ENCODE measurements at regions of chr3 and their contacts with region 1.

Region 1: DNA sequence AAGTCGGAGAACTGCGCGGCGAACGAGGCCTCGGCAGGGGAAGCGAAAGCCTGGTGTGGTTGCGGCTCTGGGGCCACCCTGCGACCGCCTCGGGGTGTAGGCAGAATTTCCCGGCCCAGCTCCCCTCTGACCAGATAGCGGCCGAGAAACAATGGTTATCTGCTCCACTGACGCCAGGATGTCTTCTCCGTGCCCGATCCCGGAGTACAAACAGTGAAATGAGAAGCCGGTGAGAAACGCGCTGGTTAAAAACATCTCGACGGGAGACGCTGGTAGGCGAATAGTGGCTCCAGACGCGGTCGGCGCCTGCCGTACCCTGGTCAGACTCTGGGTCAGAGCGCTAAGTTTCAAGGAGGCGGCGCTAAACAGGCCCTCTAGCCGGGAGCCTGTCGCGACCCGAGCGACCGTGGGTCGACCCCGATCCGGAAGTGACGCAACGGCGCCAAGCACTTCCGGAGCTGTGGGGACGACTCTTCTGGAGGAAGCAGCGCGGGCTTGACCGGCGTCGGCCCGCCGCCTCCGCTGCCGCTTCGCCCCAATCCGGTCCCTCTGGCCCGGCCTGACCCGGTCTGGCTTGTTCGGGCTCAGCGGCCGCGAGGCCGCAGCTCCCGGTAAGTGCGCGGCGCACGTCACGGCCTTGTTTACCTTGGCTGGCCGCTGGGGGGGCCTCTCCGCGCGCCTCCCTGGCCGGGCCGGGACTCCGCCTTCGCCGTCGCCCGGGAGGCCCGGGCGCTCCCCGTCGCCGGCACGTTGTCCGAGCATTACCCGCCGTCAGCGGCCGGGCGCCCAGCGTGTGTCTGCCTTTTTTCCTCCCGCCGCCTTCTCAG is at the start of gene ARIH2:
- DNase-seq: peak; percentile 94
- ATAC-seq: peak; percentile 75
- H3K4me3 Mint-ChIP-seq: peak within 1 kb of the TSS; percentile 90
- H3K27ac Mint-ChIP-seq: peak within 1 kb of the TSS; percentile 100
- H3K4me1 Mint-ChIP-seq: peaks cover 30% of the 10 kb centered on the region
- H3K27me3 Mint-ChIP-seq: no peaks in the 10 kb centered on the region
- total RNA-seq, gene ARIH2: 105 to 112 TPM

Region 2: DNA sequence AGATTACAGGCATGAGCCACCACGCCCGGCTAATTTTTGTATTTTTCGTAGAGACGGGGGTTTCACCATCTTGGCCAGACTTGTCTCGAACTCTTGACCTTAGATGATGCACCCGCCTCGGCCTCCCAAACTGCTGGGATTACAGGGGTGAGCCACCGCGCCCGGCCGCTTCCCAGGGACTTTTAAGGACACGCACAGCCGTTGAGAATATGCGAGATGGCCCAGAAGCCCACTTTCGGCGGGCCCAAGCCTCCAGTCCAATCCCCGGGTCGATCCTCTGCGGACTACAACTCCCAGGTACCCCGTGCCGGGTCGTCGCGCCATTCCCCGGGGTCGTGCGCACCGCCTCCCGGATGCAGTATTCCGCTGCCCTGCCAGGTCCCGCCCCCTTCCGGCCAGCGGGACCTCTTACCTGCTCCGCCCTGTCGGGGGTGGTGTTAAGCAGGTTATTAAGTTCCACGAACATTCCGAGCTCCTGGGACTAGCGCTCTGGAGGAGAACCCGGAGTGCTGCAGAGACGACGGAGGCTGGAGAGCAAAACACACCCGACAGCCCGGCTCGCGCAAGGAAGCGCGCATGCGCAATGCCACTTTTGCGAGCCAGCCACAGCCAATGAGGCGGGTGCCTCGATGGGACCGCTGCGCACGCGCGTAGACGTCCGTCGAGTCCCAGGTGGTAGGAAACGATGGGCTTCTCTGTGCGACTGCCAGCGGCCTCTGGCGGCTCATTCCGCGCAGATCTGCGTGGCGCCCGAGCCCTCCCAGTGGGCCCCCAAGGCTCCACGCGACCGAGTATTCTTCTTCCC is 1405.3 kb before region 1 on chr3 and contains the start of gene ELP6:
- CTCF ChIA-PET with region 1: no interaction called
- POLR2A ChIA-PET with region 1: no interaction called
- intact Hi-C with region 1: loop called in 1 of 2 experiments (anchors 5 kb)
- DNase-seq: peak; percentile 99
- ATAC-seq: peak; percentile 97
- H3K4me3 Mint-ChIP-seq: peak within 1 kb of the TSS; percentile 91
- H3K27ac Mint-ChIP-seq: peak within 1 kb of the TSS; percentile 96
- H3K4me1 Mint-ChIP-seq: peaks cover 20% of the 10 kb centered on the region
- H3K27me3 Mint-ChIP-seq: no peaks in the 10 kb centered on the region
- total RNA-seq, gene ELP6: 27.8 to 40.3 TPM

Region 3: GRCh38 chr3:48492543-48493501 is 425.8 kb before region 1 on chr3:
- CTCF ChIA-PET with region 1: no interaction called
- POLR2A ChIA-PET with region 1: no interaction called
- intact Hi-C with region 1: no loop called
- DNase-seq: no peak
- ATAC-seq: no peak
- H3K4me3 Mint-ChIP-seq: no peak overlapping the region
- H3K27ac Mint-ChIP-seq: no peak overlapping the region
- H3K4me1 Mint-ChIP-seq: no peaks in the 10 kb centered on the region
- H3K27me3 Mint-ChIP-seq: no peaks in the 10 kb centered on the region

Region 4: GRCh38 chr3:48609088-48610005 is 309.3 kb before region 1 on chr3 and contains the start of gene UQCRC1:
- CTCF ChIA-PET with region 1: no interaction called
- POLR2A ChIA-PET with region 1: no interaction called
- intact Hi-C with region 1: loop called in 1 of 2 experiments (anchors 5 kb)
- DNase-seq: peak; percentile 96
- ATAC-seq: peak; percentile 96
- H3K4me3 Mint-ChIP-seq: peak within 1 kb of the TSS; percentile 97
- H3K27ac Mint-ChIP-seq: peak within 1 kb of the TSS; percentile 95
- H3K4me1 Mint-ChIP-seq: peaks cover 27% of the 10 kb centered on the region
- H3K27me3 Mint-ChIP-seq: no peaks in the 10 kb centered on the region
- total RNA-seq, gene UQCRC1: 205 to 231 TPM

Region 5: GRCh38 chr3:48847504-48848423 is 70.8 kb before region 1 on chr3 and contains the start of gene PRKAR2A:
- CTCF ChIA-PET with region 1: interaction called, 3 read pairs
- POLR2A ChIA-PET with region 1: interaction called, 11 read pairs
- intact Hi-C with region 1: loop called (anchors 1 to 5 kb)
- DNase-seq: peak; percentile 89
- ATAC-seq: peak; percentile 89
- H3K4me3 Mint-ChIP-seq: peak within 1 kb of the TSS; percentile 82
- H3K27ac Mint-ChIP-seq: peak within 1 kb of the TSS; percentile 87
- H3K4me1 Mint-ChIP-seq: peaks cover 26% of the 10 kb centered on the region
- H3K27me3 Mint-ChIP-seq: no peaks in the 10 kb centered on the region
- total RNA-seq, gene PRKAR2A: 28.7 to 35.2 TPM

Region 6: DNA sequence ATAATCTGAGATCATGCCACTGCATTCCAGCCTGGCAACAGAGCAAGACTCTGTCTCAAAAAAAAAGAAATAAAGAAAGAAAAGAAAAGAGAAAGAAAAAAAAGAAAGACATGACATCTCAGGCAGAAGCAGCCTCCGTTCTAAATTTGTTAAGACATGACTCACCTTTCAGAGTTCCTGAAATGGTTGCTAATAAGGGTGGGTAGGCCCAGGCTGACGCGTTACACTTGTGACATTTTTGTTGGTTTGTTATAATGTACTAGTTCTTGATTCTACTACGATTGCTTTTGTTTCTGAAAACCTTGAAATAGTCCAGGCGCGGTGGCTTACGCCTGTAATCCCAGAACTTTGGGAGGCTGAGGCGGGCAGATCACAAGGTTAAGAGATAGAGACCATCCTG is 40.9 kb before region 1 on chr3:
- CTCF ChIA-PET with region 1: no interaction called
- POLR2A ChIA-PET with region 1: no interaction called
- intact Hi-C with region 1: no loop called
- DNase-seq: no peak
- ATAC-seq: no peak
- H3K4me3 Mint-ChIP-seq: no peak overlapping the region
- H3K27ac Mint-ChIP-seq: no peak overlapping the region
- H3K4me1 Mint-ChIP-seq: no peaks in the 10 kb centered on the region
- H3K27me3 Mint-ChIP-seq: no peaks in the 10 kb centered on the region

Region 7: DNA sequence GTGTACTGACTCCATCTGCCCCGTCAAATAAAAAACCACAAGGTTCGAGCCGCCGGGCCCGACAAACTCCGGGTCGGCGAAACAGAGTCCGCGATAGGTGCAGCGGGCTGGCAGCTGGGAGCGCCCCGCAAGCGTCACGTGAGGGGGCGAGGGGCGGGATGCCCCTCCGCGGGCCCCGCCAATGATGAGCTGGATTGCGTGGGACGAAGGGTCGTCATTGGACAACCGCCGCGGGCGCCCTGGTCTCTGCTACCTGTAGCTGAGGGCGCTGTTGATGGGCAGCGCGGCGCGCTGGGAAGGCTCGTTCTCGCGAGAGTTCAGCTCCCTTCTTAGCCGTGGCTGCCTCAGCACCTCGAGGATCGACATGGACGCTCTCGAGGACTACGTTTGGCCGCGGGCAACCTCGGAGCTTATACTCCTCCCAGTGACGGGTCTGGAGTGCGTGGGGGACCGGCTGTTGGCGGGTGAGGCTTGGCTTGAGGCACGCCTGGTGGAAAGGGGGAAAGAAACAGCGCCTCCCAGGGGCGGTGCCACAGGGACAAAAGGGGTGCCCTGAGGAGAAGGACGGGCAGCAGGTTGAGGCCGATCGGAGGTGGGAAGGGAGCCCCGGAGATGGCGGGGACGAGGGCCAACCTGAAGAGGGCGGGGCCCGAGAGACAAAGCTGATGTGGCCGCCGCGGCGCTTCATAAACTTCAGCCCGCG is 88.6 kb after region 1 on chr3 and contains the start of gene WDR6:
- CTCF ChIA-PET with region 1: interaction called, 3 read pairs
- POLR2A ChIA-PET with region 1: interaction called, 5 read pairs
- intact Hi-C with region 1: loop called in 1 of 2 experiments (anchors 1 kb)
- DNase-seq: peak; percentile 99
- ATAC-seq: peak; percentile 90
- H3K4me3 Mint-ChIP-seq: peak within 1 kb of the TSS; percentile 100
- H3K27ac Mint-ChIP-seq: peak within 1 kb of the TSS; percentile 100
- H3K4me1 Mint-ChIP-seq: peaks cover 16% of the 10 kb centered on the region
- H3K27me3 Mint-ChIP-seq: no peaks in the 10 kb centered on the region
- total RNA-seq, gene WDR6: 109 to 127 TPM

Region 8: DNA sequence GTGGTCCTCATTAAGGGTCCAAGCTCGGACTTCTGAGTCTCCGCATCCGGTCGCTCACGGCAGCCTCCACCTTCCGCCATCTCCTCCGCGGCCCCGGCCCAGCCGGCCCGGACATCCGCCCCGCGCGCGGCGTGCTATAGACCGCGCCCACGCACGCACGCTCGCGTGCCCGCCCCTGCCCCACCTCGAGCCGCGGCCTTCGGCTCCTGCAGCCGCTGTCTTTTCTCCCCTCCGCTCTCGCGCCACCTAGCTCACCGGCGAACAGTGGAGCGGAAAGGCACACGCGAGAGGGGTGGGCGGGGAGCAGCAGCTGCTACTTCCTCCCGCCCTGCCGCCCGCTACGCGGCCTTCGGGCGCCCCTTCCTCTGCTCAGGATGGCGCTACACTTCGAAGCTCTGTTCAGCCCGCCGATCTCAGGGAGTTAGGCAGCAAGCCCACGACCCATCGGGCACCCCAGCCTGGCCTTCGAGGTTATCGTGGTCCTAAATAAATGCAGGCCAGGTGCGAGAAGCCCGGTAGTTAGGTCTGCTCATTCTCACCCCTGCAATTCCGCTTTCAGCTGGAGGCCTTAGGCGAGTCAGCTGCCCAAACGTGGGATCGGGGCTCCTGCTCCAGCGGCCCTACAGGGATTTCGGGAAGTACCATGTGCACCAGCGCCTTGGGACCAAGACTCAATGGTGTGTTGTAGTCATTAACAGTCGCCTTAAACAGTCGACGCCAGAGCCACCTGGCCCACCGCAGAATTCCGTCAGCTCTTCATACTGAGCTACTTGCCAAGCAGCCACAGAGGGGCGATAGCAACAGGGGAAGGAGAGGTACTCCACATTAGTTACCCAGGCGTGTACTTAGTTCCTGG is 421.6 kb after region 1 on chr3 and contains the start of gene USP4:
- CTCF ChIA-PET with region 1: no interaction called
- POLR2A ChIA-PET with region 1: no interaction called
- intact Hi-C with region 1: loop called in 1 of 2 experiments (anchors 5 kb)
- DNase-seq: peak; percentile 97
- ATAC-seq: peak; percentile 89
- H3K4me3 Mint-ChIP-seq: peak within 1 kb of the TSS; percentile 99
- H3K27ac Mint-ChIP-seq: peak within 1 kb of the TSS; percentile 96
- H3K4me1 Mint-ChIP-seq: peaks cover 49% of the 10 kb centered on the region
- H3K27me3 Mint-ChIP-seq: no peaks in the 10 kb centered on the region
- total RNA-seq, gene USP4: 69.3 to 71.8 TPM

Measured in activated CD4-positive, alpha-beta T cell treated with anti-CD3 and anti-CD28 coated beads for 36 hours (primary cell).